Prostate gland (tissue), 2 donors: ENCODE measurements at regions of chr9 and their contacts with region 1.

Region 1: DNA sequence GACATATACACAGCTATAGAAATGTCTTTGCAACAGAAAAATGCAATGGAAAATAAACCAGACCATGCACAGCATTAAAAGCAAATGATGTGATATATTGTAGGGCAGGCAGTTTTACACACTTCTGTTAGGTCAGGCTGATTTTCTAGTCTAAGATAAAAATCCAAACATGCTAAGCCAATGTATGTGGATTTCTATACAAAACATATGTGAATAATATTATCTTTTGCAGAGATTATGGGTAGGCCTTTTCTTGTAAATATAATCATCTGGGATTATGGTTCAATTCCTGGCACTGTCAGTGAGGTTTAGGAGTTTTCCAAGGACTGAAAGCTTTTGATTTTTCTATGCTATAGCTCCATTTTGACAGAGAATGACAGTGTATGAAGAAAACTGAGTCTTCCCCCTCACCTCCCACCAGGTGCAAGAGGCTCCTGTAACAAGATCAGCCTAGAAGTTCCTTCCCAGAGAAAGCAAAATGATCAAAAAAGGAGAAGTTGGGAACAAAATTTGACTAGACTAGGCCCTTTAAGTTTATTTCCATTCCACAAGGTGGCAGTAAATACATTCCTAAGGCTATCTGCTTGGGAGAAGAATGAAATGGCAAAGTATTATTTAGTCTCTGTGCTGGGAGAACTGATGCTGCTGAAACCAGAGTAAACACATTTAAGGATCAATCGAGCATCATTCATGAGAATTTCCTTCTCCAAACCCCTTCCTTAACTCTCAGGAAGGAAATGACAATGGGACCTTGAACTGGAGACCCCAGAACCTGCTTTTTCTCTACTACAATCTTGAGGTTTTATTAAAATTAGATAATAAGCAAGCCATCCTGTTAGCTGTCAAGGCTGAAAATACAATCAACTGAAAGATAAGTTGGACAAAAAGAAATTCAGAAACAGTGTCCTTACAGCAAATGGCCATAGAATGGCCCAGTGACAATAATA is 133.0 kb upstream of the TUT7 start:
- DNase-seq: no peak
- H3K4me3 ChIP-seq: no peak overlapping the region
- H3K27ac ChIP-seq: no peak overlapping the region
- H3K4me1 ChIP-seq: no peaks in the 10 kb centered on the region
- H3K27me3 ChIP-seq: no peaks in the 10 kb centered on the region
- CTCF ChIP-seq: peak; percentile 33 to 77 (median 68)
- POLR2A ChIP-seq: no peak

Region 2: DNA sequence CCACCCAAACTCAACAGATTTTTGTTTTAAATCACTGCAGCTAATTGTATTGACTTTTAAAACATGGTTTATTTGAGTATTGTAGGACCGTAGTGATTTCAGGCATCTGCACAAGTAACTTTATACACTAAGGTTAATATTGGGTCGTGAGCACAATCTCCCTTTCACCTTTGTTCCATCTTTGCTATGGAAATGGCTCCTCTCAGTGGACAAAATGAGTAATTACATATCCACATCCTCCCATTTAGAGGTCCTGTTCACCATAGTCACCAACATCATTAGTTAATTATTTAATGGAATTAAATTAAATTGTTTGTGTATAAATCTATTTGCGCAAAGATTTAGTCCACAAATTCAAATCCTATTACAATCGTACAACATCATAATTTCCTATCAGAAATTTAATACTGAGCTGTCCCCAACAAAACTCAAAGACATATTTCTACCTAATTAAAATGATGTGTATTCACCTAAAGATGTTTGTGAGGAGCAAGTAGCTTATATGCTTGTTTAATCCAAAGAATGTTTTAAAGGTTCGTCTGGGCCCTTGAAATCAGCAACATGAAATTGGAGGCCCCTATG is 837.5 kb after region 1 on chr9:
- intact Hi-C with region 1: loop called (anchors 1 kb)
- DNase-seq: peak; percentile 36
- H3K4me3 ChIP-seq: no peak overlapping the region
- H3K27ac ChIP-seq: no peak overlapping the region
- H3K4me1 ChIP-seq: no peaks in the 10 kb centered on the region
- H3K27me3 ChIP-seq: no peaks in the 10 kb centered on the region
- CTCF ChIP-seq: peak; percentile 31 to 87 (median 81)
- POLR2A ChIP-seq: no peak